CD8-positive, alpha-beta T cell (primary cell): ENCODE measurements at regions of chr14 and their contacts with region 1.

Region 1: GRCh38 chr14:21455911-21456667 is at the start of gene CHD8:
- DNase-seq: peak; percentile 98 to 100 (median 99)
- ATAC-seq: peak; percentile 96
- H3K4me3 ChIP-seq: peak within 1 kb of the TSS; percentile 85 to 97
- H3K4me3 Mint-ChIP-seq: peak within 1 kb of the TSS; percentile 100
- H3K27ac ChIP-seq: peak within 1 kb of the TSS; percentile 86 to 98
- H3K27ac Mint-ChIP-seq: peak within 1 kb of the TSS; percentile 100
- H3K4me1 ChIP-seq: peaks cover 21% of the 10 kb centered on the region
- H3K4me1 Mint-ChIP-seq: peaks cover 36% of the 10 kb centered on the region
- H3K27me3 ChIP-seq: no peaks in the 10 kb centered on the region
- H3K27me3 Mint-ChIP-seq: no peaks in the 10 kb centered on the region
- CTCF ChIP-seq: peak; percentile 60
- total RNA-seq, gene CHD8: 132 to 144 TPM

Region 2: GRCh38 chr14:21300892-21301291 is 155.2 kb before region 1 on chr14:
- CTCF ChIA-PET with region 1: no interaction called
- POLR2A ChIA-PET with region 1: no interaction called
- intact Hi-C with region 1: no loop called
- DNase-seq: peak in 7 of 9 experiments; percentile 9 to 51 (median 28)
- ATAC-seq: peak; percentile 48
- H3K4me3 ChIP-seq: no peak overlapping the region
- H3K4me3 Mint-ChIP-seq: peak overlapping the region; percentile 32
- H3K27ac ChIP-seq: no peak overlapping the region
- H3K27ac Mint-ChIP-seq: no peak overlapping the region
- H3K4me1 ChIP-seq: no peaks in the 10 kb centered on the region
- H3K4me1 Mint-ChIP-seq: peaks cover 2% of the 10 kb centered on the region
- H3K27me3 ChIP-seq: peaks cover 0 to 3% of the 10 kb centered on the region in 2 experiments
- H3K27me3 Mint-ChIP-seq: peaks cover 26% of the 10 kb centered on the region
- CTCF ChIP-seq: no peak

Region 3: DNA sequence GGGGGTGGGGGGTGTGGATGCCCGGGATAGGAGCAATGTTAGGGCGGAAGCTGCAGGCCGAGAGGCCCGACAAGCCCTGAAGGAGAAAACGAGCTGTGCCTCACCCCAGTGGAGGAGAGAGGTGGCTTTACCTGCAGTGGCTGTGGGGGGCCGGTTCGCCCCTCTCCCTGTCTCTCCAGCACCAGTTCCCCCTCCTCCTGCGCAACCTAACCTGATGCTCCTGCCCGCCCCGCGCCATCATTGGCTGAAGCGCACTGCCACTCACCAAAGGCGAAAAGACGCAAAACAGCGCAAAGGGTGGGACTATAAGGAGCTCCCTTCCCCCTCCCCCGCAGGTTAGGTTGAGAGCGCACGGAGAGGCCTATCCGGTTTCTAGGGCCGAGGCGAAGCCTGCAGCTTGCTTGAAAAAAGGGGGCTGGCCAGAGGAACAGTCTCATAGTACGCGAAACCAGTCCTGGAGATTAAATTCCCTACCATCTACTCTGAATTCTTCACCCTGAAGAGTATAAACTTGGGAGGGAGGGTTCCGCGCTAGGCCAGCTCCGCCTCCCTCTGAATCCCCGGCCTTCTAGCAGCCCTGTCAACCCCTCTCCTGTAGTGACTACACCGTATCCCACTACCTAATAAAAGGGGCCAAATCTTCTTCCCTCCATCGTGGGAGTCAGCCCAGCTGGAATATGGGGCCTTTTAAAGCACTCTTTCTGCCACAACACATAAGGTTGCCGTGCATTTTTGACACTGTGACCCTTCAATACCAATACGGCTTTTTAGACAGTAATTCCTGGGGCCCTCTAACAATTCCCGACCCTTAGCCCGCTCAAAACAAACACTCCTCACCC is 18.8 kb before region 1 on chr14:
- CTCF ChIA-PET with region 1: interaction called, 25 read pairs
- POLR2A ChIA-PET with region 1: interaction called, 79 read pairs
- intact Hi-C with region 1: loop called (anchors 1 kb)
- DNase-seq: peak; percentile 98 to 100 (median 99)
- ATAC-seq: peak; percentile 99
- H3K4me3 ChIP-seq: peak overlapping the region; percentile 74 to 83
- H3K4me3 Mint-ChIP-seq: peak overlapping the region; percentile 96
- H3K27ac ChIP-seq: peak overlapping the region; percentile 76 to 84
- H3K27ac Mint-ChIP-seq: peak overlapping the region; percentile 91
- H3K4me1 ChIP-seq: peaks cover 28% of the 10 kb centered on the region
- H3K4me1 Mint-ChIP-seq: peaks cover 64% of the 10 kb centered on the region
- H3K27me3 ChIP-seq: no peaks in the 10 kb centered on the region
- H3K27me3 Mint-ChIP-seq: no peaks in the 10 kb centered on the region
- CTCF ChIP-seq: no peak

Region 4: GRCh38 chr14:21525962-21526671 is 70.0 kb after region 1 on chr14 and contains the start of gene SALL2:
- CTCF ChIA-PET with region 1: no interaction called
- POLR2A ChIA-PET with region 1: interaction called, 3 read pairs
- intact Hi-C with region 1: loop called in 1 of 2 experiments (anchors 1 kb)
- DNase-seq: peak; percentile 12 to 81 (median 64)
- ATAC-seq: peak; percentile 88
- H3K4me3 ChIP-seq: peak within 1 kb of the TSS; percentile 57 to 62
- H3K4me3 Mint-ChIP-seq: peak within 1 kb of the TSS; percentile 82
- H3K27ac ChIP-seq: peak within 1 kb of the TSS in 1 of 2 experiments; percentile 29
- H3K27ac Mint-ChIP-seq: peak within 1 kb of the TSS; percentile 84
- H3K4me1 ChIP-seq: peaks cover 14% of the 10 kb centered on the region
- H3K4me1 Mint-ChIP-seq: peaks cover 19% of the 10 kb centered on the region
- H3K27me3 ChIP-seq: no peaks in the 10 kb centered on the region
- H3K27me3 Mint-ChIP-seq: no peaks in the 10 kb centered on the region
- CTCF ChIP-seq: no peak
- total RNA-seq, gene SALL2: 1.4 to 1.6 TPM

Region 5: DNA sequence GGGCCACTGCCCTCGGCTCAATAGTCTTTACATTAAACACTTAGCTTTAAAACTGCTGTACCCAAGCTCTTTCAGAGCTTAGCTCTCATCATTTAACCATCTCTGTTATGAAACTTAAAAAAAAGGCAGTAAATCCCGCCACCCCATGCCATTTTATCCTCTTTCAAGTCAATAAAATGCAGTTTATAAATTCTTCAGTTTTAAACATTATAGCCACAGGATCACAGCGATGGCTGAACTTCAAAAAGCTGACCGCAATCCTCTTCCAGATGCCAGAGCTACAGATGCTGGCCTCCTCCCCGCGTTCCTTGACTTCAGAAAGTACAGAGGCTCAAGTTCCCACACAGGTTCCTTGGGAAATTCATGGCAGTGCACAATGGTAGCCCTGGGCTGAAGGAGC is 119.6 kb after region 1 on chr14:
- CTCF ChIA-PET with region 1: no interaction called
- POLR2A ChIA-PET with region 1: no interaction called
- intact Hi-C with region 1: no loop called
- DNase-seq: no peak
- ATAC-seq: no peak
- H3K4me3 ChIP-seq: no peak overlapping the region
- H3K4me3 Mint-ChIP-seq: no peak overlapping the region
- H3K27ac ChIP-seq: no peak overlapping the region
- H3K27ac Mint-ChIP-seq: no peak overlapping the region
- H3K4me1 ChIP-seq: no peaks in the 10 kb centered on the region
- H3K4me1 Mint-ChIP-seq: no peaks in the 10 kb centered on the region
- H3K27me3 ChIP-seq: peaks cover 0 to 2% of the 10 kb centered on the region in 2 experiments
- H3K27me3 Mint-ChIP-seq: peaks cover 15% of the 10 kb centered on the region
- CTCF ChIP-seq: no peak